Heart left ventricle (tissue), 16 donors: ENCODE measurements at regions of chr16 and their contacts with region 1.

Region 1: DNA sequence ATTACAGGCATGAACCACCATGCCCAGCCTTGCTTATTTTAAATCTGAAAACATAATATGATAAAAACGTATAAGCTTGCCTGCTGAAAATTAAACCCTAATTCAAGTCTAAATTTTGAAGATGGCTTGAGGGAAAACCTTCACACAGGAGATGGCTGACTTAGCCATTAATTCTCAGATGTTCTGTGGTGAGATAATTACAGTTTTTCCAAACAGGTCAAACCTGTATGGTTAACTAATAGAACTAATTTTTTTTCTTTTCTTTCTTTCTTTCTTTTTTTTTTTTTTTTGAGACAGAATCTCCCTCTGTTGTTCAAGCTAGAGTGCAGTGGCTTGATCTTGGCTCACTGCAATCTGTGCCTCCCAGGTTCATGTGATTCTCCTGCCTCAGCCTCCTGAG is 5.8 kb upstream of the ITGAL start:
- DNase-seq: no peak
- ATAC-seq: no peak
- H3K4me3 ChIP-seq: no peak overlapping the region
- H3K27ac ChIP-seq: no peak overlapping the region
- H3K4me1 ChIP-seq: peaks cover 0 to 34% (median 0%) of the 10 kb centered on the region in 12 donors
- H3K27me3 ChIP-seq: peaks cover 0 to 8% (median 0%) of the 10 kb centered on the region in 9 donors
- CTCF ChIP-seq: no peak
- POLR2A ChIP-seq: no peak

Region 2: DNA sequence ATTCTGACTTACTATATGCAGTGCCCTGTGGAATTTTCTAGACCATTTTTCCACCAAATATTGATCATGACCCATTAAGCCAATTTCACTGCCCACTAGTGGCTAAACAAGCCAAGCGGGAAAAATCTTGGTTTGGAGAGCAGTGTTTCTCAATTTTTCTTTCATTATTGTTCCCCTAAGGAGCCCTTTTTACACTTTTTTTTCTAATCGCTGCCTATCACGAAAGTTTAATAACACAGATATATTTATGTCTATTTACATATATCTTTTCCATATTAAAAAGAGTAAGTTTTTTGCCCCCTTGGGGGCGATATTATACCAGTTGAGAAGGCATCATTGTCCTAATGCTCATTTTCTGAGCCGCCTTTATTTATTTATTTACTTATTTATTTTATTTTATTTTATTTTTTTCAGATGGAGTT is 424.9 kb before region 1 on chr16:
- intact Hi-C with region 1: no loop called
- DNase-seq: no peak
- ATAC-seq: no peak
- H3K4me3 ChIP-seq: no peak overlapping the region
- H3K27ac ChIP-seq: no peak overlapping the region
- H3K4me1 ChIP-seq: no peaks in the 10 kb centered on the region
- H3K27me3 ChIP-seq: peaks cover 0 to 4% (median 0%) of the 10 kb centered on the region in 9 donors
- CTCF ChIP-seq: peak; percentile 25 to 59 (median 46)
- POLR2A ChIP-seq: no peak

Region 3: DNA sequence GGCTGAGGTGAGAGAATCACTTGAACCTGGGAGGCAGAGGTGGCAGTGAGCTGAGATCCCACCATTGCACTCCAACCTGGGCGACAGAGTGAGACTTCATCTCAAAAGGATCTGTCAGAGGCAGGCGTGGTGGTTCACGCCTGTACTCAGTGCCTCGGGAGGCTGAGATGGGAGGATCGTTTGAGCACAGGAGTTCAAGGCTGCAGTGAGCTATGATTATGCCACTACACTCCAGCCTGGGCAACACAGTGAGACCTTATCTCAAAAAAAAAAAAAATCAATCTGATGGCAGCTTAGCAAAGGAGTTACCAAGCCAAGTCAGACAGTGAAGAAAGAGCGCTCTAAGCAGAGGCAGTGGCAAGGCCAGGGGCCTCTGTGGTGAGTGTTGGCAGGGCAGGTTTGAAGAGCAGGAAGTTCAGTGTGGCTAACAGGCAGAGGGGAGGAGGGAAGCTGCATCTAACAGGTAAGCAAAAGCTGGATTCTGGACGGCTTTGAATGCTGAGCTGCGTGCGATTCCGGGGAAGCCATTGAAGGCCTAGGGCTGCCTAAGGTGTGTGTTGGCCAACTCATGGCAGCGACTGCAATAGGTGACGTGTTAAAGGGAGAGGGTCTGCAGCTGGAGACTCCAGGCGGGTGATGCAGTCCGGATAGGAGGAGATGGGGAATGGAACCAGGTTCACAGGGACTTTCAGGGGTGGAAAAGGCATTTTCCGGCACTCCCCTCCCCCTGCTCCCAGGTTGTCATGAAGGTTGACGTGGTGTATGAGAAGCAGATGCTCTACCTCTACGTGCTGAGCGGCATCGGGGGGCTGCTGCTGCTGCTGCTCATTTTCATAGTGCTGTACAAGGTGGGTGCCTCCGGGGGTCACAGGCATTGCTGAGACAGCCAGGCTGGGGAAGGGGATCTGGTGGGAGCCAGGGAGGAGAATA is 52.6 kb after region 1 on chr16:
- intact Hi-C with region 1: loop called in 1 of 10 experiments (anchors 5 kb)
- DNase-seq: peak in 1 of 5 donors; percentile 9
- ATAC-seq: no peak
- H3K4me3 ChIP-seq: no peak overlapping the region
- H3K27ac ChIP-seq: no peak overlapping the region
- H3K4me1 ChIP-seq: peaks cover 0 to 8% (median 1%) of the 10 kb centered on the region in 12 donors
- H3K27me3 ChIP-seq: no peaks in the 10 kb centered on the region
- CTCF ChIP-seq: no peak
- POLR2A ChIP-seq: no peak